WTC11 (cell line): ENCODE measurements at regions of chr22 and their contacts with region 1.

Region 1: GRCh38 chr22:17891481-17892167 is 117.4 kb upstream of the BID start:
- DNase-seq: peak; percentile 63
- ATAC-seq: peak; percentile 49
- H3K4me3 Mint-ChIP-seq: no peak overlapping the region
- H3K27ac Mint-ChIP-seq: no peak overlapping the region
- H3K4me1 Mint-ChIP-seq: no peaks in the 10 kb centered on the region
- H3K27me3 Mint-ChIP-seq: no peaks in the 10 kb centered on the region
- CTCF ChIP-seq: no peak

Region 2: GRCh38 chr22:17785185-17786184 is 106.1 kb before region 1 on chr22:
- CTCF ChIA-PET with region 1: interaction called, 10 read pairs
- POLR2A ChIA-PET with region 1: no interaction called
- DNase-seq: peak; percentile 95
- ATAC-seq: peak; percentile 82
- H3K4me3 Mint-ChIP-seq: no peak overlapping the region
- H3K27ac Mint-ChIP-seq: no peak overlapping the region
- H3K4me1 Mint-ChIP-seq: peaks cover 10% of the 10 kb centered on the region
- H3K27me3 Mint-ChIP-seq: no peaks in the 10 kb centered on the region; the same call in 1 of the 2 replicates
- CTCF ChIP-seq: peak; percentile 65; the same call in 1 of the 2 replicates

Region 3: GRCh38 chr22:17830043-17830961 is 61.3 kb before region 1 on chr22:
- CTCF ChIA-PET with region 1: interaction called, 15 read pairs
- POLR2A ChIA-PET with region 1: no interaction called
- DNase-seq: peak; percentile 94
- ATAC-seq: peak; percentile 95
- H3K4me3 Mint-ChIP-seq: no peak overlapping the region
- H3K27ac Mint-ChIP-seq: no peak overlapping the region
- H3K4me1 Mint-ChIP-seq: no peaks in the 10 kb centered on the region
- H3K27me3 Mint-ChIP-seq: no peaks in the 10 kb centered on the region
- CTCF ChIP-seq: peak; percentile 97

Region 4: DNA sequence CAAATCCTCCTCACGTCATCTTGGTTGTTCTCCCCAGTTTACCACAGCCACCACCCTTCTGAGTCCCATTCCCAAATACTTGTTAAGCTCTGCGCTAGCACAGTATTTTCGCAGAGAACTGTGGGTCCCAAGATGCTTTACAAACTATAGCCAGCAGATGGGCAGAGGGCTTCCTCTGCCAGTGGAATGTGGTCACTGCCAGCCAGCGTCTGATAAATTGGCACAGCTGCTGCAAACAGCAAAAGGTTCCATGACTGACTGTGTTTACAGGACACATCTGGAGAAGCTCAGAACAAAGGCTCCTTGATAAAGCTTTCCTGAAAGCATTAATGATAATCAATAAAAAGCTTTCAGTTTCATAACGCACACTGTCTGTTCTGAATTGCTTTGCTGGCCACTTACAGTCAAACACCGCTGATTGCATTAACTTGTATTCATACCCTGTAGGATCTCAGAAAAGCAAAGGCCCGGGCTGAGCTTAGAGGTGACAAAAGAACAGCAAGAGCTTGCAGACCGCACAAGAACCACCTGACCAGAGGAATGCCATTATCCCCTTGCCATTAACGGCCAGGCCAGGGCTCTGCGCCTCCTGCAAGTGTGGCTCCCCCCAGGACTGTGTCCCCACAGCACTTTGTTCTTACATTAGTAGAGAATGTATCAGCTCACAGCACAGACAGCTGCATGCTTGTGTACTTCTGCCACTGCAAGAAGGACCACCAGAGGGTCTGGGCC is 12.1 kb after region 1 on chr22:
- CTCF ChIA-PET with region 1: interaction called, 44 read pairs
- POLR2A ChIA-PET with region 1: no interaction called
- DNase-seq: peak; percentile 31
- ATAC-seq: peak; percentile 87
- H3K4me3 Mint-ChIP-seq: no peak overlapping the region
- H3K27ac Mint-ChIP-seq: 0 out of 2 replicates have a peak overlapping the region, but pooled peaks have one; percentile 38
- H3K4me1 Mint-ChIP-seq: peaks cover 8% of the 10 kb centered on the region; the same call in 1 of the 2 replicates
- H3K27me3 Mint-ChIP-seq: no peaks in the 10 kb centered on the region
- CTCF ChIP-seq: no peak

Region 5: DNA sequence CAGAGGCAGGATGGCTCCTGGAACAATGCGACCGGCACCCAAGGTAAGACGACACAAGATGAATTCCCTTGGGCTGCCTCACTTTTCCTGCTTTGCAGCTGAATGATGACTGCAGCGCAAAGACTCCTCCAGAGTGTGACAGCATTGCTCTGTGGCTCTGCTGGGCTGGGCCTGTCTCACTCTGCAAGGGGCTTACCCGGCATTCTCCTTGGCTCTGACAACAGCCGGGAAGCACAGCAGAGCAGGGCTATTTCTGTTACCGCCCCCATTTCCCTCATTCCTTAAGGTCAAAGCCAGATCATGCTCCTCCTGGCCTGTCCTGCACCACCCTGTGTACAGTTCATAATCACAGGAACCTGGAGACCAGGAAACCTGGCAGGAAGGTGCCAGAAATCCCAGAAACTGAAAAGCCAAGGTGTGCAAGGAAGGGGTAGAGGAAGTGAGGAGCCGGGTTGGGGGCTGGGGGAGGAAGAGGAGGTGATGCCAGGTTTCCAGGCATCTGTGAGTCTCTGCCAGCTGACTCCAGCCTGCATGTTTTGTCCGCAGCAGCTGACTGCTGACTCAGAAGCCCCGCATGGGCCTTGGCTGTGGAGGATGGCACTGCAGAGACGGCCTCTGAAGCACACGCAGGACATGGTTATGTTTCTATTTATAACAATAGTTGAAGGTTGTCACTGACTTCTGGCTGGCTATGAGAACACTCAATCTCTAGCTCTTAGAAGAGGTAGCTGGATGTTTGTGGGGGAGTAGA is 19.1 kb after region 1 on chr22:
- CTCF ChIA-PET with region 1: interaction called, 44 read pairs
- POLR2A ChIA-PET with region 1: no interaction called
- DNase-seq: peak; percentile 61
- ATAC-seq: peak; percentile 99
- H3K4me3 Mint-ChIP-seq: no peak overlapping the region
- H3K27ac Mint-ChIP-seq: 0 out of 2 replicates have a peak overlapping the region, but pooled peaks have one; percentile 11
- H3K4me1 Mint-ChIP-seq: peaks cover 28% of the 10 kb centered on the region
- H3K27me3 Mint-ChIP-seq: no peaks in the 10 kb centered on the region
- CTCF ChIP-seq: no peak

Region 6: DNA sequence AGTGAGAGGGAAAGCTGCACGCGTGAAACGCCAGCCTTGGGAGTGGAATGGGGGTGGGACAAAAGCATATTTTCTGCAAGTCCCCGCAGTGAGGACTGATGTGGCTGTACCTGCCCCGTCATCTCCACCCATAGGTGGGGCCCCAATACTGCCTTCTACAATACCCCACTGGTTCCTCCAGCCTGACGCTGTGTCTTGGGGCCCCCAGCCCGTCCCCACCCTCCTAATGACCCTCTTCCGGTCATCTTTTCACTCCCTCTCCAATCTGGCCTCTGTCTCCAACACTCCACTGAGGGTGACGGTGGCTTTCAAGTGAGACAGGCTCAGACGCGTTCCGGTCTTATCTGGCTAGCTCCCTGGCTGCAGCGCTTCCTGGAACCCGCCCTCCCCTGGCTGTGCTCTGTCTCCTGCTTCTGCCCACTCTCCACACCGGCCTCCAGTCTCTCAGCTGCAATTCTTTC is 28.6 kb after region 1 on chr22:
- CTCF ChIA-PET with region 1: interaction called, 10 read pairs
- POLR2A ChIA-PET with region 1: no interaction called
- DNase-seq: peak; percentile 47
- ATAC-seq: peak; percentile 42
- H3K4me3 Mint-ChIP-seq: peak overlapping the region; percentile 12; the same call in 1 of the 2 replicates
- H3K27ac Mint-ChIP-seq: peak overlapping the region; percentile 91
- H3K4me1 Mint-ChIP-seq: peaks cover 8% of the 10 kb centered on the region; the same call in 1 of the 2 replicates
- H3K27me3 Mint-ChIP-seq: no peaks in the 10 kb centered on the region
- CTCF ChIP-seq: no peak

Region 7: DNA sequence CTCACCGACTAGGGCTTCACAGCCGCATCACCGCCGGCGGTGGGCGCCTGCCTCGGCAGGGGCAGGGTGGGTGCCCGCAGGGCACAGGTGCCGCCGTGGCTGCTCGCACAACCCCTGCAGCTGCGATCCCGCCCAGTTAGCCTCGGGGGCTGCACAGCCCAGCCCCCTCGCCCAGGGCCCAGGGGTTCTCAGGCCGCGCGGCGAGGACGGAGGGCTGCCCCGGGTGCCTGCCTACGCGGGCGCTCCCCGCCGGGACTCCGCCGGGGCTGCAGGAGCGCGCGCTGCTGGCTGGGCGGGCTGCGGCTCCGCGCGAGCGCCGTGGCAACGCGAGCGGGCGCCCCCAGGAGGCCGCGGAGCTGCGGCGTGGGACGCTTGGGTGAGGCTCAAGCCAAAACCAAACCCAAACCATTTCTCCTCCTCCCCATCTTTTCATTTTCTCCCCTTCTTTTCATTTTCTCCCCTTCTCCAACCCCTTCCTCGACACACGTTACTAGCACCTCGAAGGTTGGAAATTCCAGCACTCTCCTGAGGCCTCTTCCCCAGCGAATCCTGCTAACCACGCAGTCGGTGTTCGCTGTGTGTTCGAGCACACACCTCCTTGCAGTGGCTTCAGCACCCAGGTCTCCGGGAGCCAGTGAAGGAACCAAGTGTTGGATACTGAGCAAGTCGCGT is 132.8 kb after region 1 on chr22 and contains the start of gene MICAL3:
- CTCF ChIA-PET with region 1: interaction called, 10 read pairs
- POLR2A ChIA-PET with region 1: no interaction called
- DNase-seq: peak; percentile 38
- ATAC-seq: peak; percentile 55
- H3K4me3 Mint-ChIP-seq: peak within 1 kb of the TSS; percentile 91
- H3K27ac Mint-ChIP-seq: no peak within 1 kb of the TSS
- H3K4me1 Mint-ChIP-seq: peaks cover 16% of the 10 kb centered on the region
- H3K27me3 Mint-ChIP-seq: peaks cover 73% of the 10 kb centered on the region
- CTCF ChIP-seq: no peak; the same call in 1 of the 2 replicates
- total RNA-seq, gene MICAL3: 35.6 to 41.2 TPM (median 38.8 TPM) in 3 replicates